ENCODE measurements at regions of chr1 and their contacts with region 1.

Region 1: DNA sequence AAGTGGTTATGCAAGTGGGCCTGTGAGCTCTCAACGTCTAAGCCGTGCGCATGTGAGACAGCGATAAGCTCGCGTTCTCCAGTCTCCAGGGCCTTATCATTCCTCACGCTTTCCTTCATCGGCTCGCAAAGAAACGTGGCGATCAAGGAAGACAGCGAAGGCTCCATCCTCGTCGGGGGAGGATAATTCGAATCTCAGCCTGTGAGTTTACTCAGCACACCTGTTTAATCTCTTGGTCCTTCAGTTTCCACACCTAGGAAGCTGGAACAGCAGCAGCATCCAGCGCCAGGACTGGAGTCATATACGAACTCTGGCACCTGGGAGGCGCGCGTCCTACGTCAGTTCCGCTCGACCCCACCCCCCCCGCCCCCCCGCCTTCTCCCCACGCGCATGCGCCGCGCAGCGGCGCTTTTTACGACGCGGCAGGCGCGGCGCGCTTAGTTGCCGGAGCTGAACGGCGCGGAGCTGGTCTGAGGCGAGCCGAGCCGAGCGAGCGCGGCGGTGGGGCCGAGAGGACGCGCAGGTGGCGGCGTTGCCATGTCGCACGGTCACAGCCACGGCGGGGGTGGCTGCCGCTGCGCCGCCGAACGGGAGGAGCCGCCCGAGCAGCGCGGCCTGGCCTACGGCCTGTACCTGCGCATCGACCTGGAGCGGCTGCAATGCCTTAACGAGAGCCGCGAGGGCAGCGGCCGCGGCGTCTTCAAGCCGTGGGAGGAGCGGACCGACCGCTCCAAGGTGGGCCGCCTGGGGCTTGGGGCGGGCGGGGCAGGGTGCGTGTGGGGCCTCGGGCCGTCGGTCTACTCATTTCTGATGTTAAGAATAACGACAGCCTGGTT is at the start of gene PITHD1:
- DNase-seq: peak; percentile 76
- ATAC-seq: peak; percentile 84
- H3K4me3 ChIP-seq: peak within 1 kb of the TSS; percentile 98 to 99
- H3K27ac ChIP-seq: peak within 1 kb of the TSS; percentile 75
- H3K4me1 ChIP-seq: peaks cover 18 to 21% of the 10 kb centered on the region in 2 experiments
- H3K27me3 ChIP-seq: no peaks in the 10 kb centered on the region
- CTCF ChIP-seq: no peak
- POLR2A ChIP-seq: peak; percentile 64
- RAD21 ChIP-seq: no peak
- total RNA-seq, gene PITHD1: 57.2 TPM

Region 2: DNA sequence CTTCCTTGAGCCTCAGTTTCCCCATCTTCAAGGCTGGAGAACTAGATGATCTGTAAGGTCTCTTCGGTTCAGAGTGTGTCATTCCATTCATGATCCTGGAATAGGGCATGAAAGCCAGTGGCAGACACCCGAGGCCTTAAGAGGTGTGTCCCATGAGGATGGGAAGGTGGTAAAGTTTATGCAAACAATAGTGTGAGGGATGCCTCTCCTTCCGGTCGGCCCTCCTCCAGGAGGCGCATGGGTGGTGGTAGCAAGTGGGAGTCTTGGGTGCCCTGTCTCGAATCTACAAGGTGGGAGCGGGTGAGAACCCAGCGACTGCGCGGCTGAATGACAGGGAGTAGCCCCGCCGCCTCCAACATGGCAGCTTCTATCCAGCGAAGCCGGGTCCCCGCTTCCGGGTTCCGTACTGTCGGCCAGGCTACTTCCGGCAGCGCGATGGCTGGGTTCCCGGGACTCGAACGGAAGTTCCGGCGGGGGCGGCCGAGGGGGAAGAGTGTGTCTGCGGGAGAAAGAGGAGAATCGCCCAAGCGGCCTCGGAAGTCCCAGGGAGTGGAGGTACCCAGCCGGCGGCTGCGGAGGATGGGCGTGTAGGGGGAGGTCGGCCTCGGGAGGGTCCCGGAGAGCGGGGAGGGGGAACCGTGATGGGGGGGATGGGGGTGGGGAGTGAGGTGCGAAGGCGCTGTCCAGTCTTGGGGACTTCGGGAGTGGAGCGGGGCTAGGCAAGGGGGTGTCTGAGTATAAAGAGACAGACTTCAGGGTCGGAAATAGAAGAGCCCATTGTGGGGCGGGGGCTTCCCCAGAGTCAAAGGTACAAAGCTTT is 12.7 kb after region 1 on chr1 and contains the start of gene LYPLA2:
- CTCF ChIA-PET with region 1: interaction called, 7 read pairs
- POLR2A ChIA-PET with region 1: interaction called, 30 read pairs
- RAD21 ChIA-PET with region 1: no interaction called
- intact Hi-C with region 1: no loop called
- DNase-seq: peak; percentile 75
- ATAC-seq: peak; percentile 77
- H3K4me3 ChIP-seq: peak within 1 kb of the TSS; percentile 89 to 95
- H3K27ac ChIP-seq: peak within 1 kb of the TSS; percentile 79
- H3K4me1 ChIP-seq: peaks cover 31 to 49% of the 10 kb centered on the region in 2 experiments
- H3K27me3 ChIP-seq: no peaks in the 10 kb centered on the region
- CTCF ChIP-seq: no peak
- POLR2A ChIP-seq: no peak
- RAD21 ChIP-seq: no peak
- total RNA-seq, gene LYPLA2: 78.0 TPM

Region 3: GRCh38 chr1:23800400-23801337 is 22.5 kb after region 1 on chr1 and contains the start of gene GALE:
- CTCF ChIA-PET with region 1: no interaction called
- POLR2A ChIA-PET with region 1: interaction called, 4 read pairs
- RAD21 ChIA-PET with region 1: no interaction called
- intact Hi-C with region 1: loop called (anchors 1 kb)
- DNase-seq: peak; percentile 86
- ATAC-seq: peak; percentile 71
- H3K4me3 ChIP-seq: peak within 1 kb of the TSS; percentile 65 to 94
- H3K27ac ChIP-seq: peak within 1 kb of the TSS; percentile 93
- H3K4me1 ChIP-seq: peaks cover 10 to 35% of the 10 kb centered on the region in 2 experiments
- H3K27me3 ChIP-seq: no peaks in the 10 kb centered on the region
- CTCF ChIP-seq: no peak
- POLR2A ChIP-seq: peak; percentile 57
- RAD21 ChIP-seq: no peak
- total RNA-seq, gene GALE: 114 TPM

Region 4: GRCh38 chr1:23951571-23952095 is 173.4 kb after region 1 on chr1:
- CTCF ChIA-PET with region 1: no interaction called
- POLR2A ChIA-PET with region 1: no interaction called
- RAD21 ChIA-PET with region 1: no interaction called
- intact Hi-C with region 1: no loop called
- DNase-seq: no peak
- ATAC-seq: no peak
- H3K4me3 ChIP-seq: no peak overlapping the region
- H3K27ac ChIP-seq: no peak overlapping the region
- H3K4me1 ChIP-seq: peaks cover 1 to 20% of the 10 kb centered on the region in 2 experiments; a peak in 2 of 4 replicates
- H3K27me3 ChIP-seq: no peaks in the 10 kb centered on the region
- CTCF ChIP-seq: no peak
- POLR2A ChIP-seq: no peak
- RAD21 ChIP-seq: no peak

Region 5: DNA sequence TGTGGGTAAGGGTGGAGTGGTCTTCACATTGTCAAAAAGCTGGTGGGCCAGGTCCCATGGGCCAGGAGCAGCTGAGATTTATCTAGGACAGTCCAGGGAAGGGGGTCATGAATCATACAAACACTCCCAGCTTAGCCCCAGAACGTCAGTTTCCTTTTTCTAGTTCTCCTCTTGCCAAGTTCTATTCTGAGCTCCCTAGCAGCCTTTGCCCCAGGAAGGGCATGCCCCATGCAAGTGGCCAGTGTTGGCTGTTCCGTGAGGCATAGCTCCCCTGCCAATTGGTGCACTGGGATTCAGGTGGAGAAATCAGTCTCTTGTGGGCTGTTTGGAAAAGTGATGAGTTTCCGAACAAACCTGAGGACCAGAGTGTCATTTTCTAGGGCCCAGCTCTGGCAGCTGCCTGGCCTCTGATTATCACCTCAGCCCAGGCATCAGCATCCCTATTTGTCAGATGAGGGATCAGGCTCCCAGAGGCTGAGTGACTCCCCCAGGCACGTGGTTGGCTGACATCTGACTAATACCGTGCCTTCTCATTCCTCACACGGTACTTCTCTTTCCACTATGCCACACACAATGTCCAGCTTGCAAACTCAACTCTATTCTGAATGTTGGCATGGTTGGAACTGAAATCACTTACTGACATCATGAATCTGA is 347.9 kb after region 1 on chr1:
- CTCF ChIA-PET with region 1: no interaction called
- POLR2A ChIA-PET with region 1: no interaction called
- RAD21 ChIA-PET with region 1: no interaction called
- intact Hi-C with region 1: no loop called
- DNase-seq: no peak
- ATAC-seq: no peak
- H3K4me3 ChIP-seq: no peak overlapping the region
- H3K27ac ChIP-seq: no peak overlapping the region
- H3K4me1 ChIP-seq: no peaks in the 10 kb centered on the region
- H3K27me3 ChIP-seq: no peaks in the 10 kb centered on the region
- CTCF ChIP-seq: no peak
- POLR2A ChIP-seq: no peak
- RAD21 ChIP-seq: no peak